Left lung (tissue), 14 donors: ENCODE measurements at regions of chr17 and their contacts with region 1.

Region 1: DNA sequence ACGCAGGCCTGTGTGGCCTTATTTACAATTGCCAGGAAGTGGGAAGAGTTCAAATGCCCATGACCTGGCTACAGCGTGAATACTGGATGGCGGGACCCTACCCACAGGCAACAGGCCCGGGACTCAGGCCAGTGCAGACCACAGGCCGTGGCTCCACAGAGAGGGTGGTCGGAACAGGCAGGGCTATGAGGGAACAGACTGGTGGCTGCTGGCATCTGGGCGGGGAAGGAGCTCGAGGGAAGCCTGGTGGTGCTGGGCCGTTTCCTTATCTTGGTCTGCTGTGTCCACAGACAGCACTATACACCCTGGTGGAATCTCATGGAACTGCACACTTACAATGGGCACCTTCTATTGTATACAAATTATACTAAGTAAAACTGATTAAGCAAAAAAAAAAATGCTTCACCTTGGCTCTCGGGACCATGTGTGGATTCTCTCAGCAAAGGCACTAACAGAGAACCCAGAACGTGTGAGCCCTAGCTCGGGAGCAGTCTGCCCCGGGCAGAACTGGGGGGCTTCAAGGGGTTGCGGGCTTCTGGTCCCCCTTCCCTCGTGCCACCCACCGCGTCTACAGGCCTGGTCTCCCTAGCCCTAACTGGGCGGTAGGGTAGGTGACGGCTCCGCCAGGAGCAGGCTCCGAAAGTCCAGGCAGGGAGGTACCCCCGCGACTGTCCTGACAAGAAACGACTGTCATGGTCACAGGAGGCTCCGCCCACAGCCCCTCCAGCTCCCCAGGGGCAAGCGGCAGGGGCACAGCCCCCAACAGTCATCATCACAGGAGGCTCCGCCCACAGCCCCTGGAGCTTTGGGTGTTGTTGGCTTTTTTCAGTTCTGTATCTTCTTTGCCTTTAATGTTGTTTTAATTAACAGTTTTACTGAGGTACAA is 21.8 kb downstream of the CEP131 start:
- DNase-seq: peak in 2 of 4 donors; percentile 25 to 49
- ATAC-seq: peak; percentile 89
- H3K4me3 ChIP-seq: no peak overlapping the region
- H3K27ac ChIP-seq: no peak overlapping the region
- H3K4me1 ChIP-seq: peaks cover 0 to 22% of the 10 kb centered on the region in 2 donors
- H3K27me3 ChIP-seq: no peaks in the 10 kb centered on the region
- CTCF ChIP-seq: peak; percentile 53 to 76

Region 2: GRCh38 chr17:81109957-81110356 is 91.0 kb before region 1 on chr17:
- intact Hi-C with region 1: no loop called
- DNase-seq: no peak
- ATAC-seq: no peak
- H3K4me3 ChIP-seq: no peak overlapping the region
- H3K27ac ChIP-seq: no peak overlapping the region
- H3K4me1 ChIP-seq: no peaks in the 10 kb centered on the region
- H3K27me3 ChIP-seq: no peaks in the 10 kb centered on the region
- CTCF ChIP-seq: no peak

Region 3: DNA sequence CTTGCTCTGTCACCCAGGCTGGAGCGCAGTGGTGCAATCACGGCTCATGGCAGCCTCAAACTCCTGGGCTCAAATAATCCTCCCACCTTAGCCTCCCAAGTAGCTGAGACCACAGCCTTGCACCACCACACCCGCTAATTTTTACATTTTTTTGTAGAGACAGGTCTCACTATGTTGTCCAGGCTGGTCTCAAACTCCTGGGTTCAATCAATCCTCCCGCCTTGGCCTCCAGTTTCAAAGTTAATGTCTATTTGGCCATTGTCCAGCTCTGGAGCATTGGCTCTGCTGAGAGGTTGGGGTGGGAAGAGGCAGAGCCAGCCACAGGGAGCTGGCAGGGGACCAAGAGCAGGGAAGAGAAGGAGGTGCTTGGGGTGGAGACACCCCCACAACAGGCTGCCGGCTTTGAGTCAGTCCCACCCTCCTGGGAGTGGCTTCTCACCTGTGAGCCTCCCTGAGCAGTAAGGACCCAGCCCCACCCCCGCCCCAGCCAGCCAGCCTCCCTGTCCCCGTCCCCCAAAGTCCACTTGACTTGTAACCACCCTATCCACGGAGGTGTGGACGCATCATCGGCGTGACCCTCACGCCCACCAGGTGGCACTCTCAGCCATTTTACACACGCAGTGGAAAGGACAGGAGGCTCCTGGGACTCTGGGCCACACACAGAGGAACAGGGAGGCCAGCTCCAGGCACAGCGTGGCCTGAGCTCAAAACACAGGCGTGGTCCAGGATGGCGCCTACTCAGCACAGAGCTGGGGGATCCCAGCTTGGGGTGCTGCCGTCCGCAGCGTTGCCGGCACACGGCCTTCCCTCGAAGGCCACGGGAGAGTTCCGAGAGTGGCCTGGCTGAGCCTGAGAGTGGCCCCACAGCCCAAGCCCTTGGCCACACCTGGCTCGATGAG is 58.4 kb before region 1 on chr17:
- intact Hi-C with region 1: loop called in 1 of 2 experiments (anchors 2 kb)
- DNase-seq: peak in 3 of 4 donors; percentile 59 to 91 (median 82)
- ATAC-seq: peak; percentile 91
- H3K4me3 ChIP-seq: no peak overlapping the region
- H3K27ac ChIP-seq: no peak overlapping the region
- H3K4me1 ChIP-seq: peaks cover 6 to 17% of the 10 kb centered on the region in 2 donors
- H3K27me3 ChIP-seq: no peaks in the 10 kb centered on the region
- CTCF ChIP-seq: peak; percentile 40 to 67